Endothelial cell of umbilical vein (primary cell): ENCODE measurements at regions of chr18 and their contacts with region 1.

Region 1: GRCh38 chr18:47100214-47100831 is 50.0 kb downstream of the HDHD2 start:
- DNase-seq: peak; percentile 56
- H3K4me3 ChIP-seq: no peak overlapping the region
- H3K27ac ChIP-seq: no peak overlapping the region
- H3K4me1 ChIP-seq: no peaks in the 10 kb centered on the region
- H3K27me3 ChIP-seq: no peaks in the 10 kb centered on the region
- CTCF ChIP-seq: peak; percentile 70 to 78
- POLR2A ChIP-seq: no peak

Region 2: GRCh38 chr18:47113796-47114540 is 13.6 kb after region 1 on chr18:
- CTCF ChIA-PET with region 1: interaction called, 11 read pairs
- POLR2A ChIA-PET with region 1: no interaction called
- dilution Hi-C with region 1: no loop called
- intact Hi-C with region 1: no loop called
- DNase-seq: no peak
- H3K4me3 ChIP-seq: no peak overlapping the region
- H3K27ac ChIP-seq: no peak overlapping the region
- H3K4me1 ChIP-seq: no peaks in the 10 kb centered on the region
- H3K27me3 ChIP-seq: no peaks in the 10 kb centered on the region
- CTCF ChIP-seq: no peak
- POLR2A ChIP-seq: no peak

Region 3: GRCh38 chr18:47150029-47150823 is 49.9 kb after region 1 on chr18 and contains the start of gene HDHD2:
- CTCF ChIA-PET with region 1: no interaction called
- POLR2A ChIA-PET with region 1: no interaction called
- dilution Hi-C with region 1: no loop called
- intact Hi-C with region 1: loop called (anchors 1 kb)
- DNase-seq: peak; percentile 82
- H3K4me3 ChIP-seq: peak within 1 kb of the TSS; percentile 45 to 72 (median 57)
- H3K27ac ChIP-seq: peak within 1 kb of the TSS; percentile 63
- H3K4me1 ChIP-seq: peaks cover 15% of the 10 kb centered on the region
- H3K27me3 ChIP-seq: no peaks in the 10 kb centered on the region
- CTCF ChIP-seq: no peak
- POLR2A ChIP-seq: peak; percentile 95
- total RNA-seq, gene HDHD2: 13.7 and 18.7 TPM in 2 replicates

Region 4: DNA sequence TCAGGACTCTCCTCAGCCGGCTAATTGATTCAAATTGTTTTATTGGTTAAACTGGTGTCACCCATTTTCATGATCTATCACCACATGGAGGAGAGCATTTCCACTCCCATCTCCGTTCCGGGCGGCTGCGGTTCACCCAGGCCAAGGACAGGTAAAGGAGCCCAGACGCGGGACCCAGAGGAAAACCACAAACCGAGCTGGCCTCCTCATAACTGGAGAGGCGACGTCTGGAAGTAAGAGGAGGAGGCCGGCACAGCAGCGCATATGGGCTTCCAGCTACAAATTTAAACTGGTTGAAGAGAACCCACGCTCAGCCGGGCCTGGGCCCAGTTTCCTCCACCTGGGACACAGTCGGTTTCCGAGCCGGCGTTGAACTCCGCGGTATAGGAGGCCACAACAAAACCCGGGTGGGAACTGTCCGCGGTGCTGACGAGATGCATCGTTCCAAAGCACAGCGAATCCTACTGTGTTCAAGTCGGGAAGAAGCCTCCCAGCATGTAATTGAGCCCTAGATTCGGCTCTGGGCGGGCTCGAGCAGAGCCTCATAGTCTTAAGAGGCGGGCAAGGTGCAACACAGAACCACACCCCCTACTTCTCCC is 154.1 kb after region 1 on chr18:
- CTCF ChIA-PET with region 1: no interaction called
- POLR2A ChIA-PET with region 1: no interaction called
- dilution Hi-C with region 1: no loop called
- intact Hi-C with region 1: no loop called
- DNase-seq: peak; percentile 28
- H3K4me3 ChIP-seq: no peak overlapping the region
- H3K27ac ChIP-seq: no peak overlapping the region
- H3K4me1 ChIP-seq: no peaks in the 10 kb centered on the region
- H3K27me3 ChIP-seq: peaks cover 46 to 52% of the 10 kb centered on the region in 2 experiments
- CTCF ChIP-seq: no peak
- POLR2A ChIP-seq: no peak